Posterior vena cava (tissue), 2 donors: ENCODE measurements at regions of chr9 and their contacts with region 1.

Region 1: GRCh38 chr9:18347386-18348082 is 126.4 kb upstream of the ADAMTSL1 start:
- DNase-seq: no peak

Region 2: GRCh38 chr9:20191228-20191840 is 1843.8 kb after region 1 on chr9:
- intact Hi-C with region 1: loop called in 1 of 2 experiments (anchors 5 kb)
- DNase-seq: no peak